GM13976 (cell line): ENCODE measurements at regions of chr1 and their contacts with region 1.

Region 1: DNA sequence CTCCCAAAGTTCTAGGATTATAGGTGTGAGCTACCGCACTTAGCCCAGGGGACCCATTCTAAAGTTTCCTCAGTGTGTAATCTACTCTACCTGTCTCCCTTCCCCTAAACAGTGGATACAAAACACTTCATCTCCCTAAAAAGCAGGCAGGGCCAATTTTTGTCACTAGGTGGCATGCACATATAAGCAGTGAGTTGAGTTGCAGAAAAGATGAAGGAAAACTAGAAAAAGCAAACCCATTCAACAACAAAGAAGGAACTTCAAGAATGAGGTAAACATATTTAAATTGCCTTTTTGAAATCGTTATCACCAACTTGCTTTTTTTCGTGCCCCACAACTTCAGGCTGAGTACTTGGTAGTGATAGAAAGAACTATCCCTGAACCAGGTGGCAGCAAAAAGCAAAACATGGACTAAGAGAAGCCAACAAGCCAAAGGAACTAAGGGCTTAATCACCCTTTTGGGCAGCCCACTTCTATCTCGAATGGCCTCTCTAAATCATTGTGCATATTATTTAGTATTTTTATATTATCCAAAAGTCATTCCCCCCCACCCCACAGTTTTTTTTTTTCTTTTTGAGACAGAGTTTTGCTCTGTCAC is 19.7 kb upstream of the ALDH9A1 start:
- DNase-seq: peak; percentile 61
- CTCF ChIP-seq: peak; percentile 59

Region 2: DNA sequence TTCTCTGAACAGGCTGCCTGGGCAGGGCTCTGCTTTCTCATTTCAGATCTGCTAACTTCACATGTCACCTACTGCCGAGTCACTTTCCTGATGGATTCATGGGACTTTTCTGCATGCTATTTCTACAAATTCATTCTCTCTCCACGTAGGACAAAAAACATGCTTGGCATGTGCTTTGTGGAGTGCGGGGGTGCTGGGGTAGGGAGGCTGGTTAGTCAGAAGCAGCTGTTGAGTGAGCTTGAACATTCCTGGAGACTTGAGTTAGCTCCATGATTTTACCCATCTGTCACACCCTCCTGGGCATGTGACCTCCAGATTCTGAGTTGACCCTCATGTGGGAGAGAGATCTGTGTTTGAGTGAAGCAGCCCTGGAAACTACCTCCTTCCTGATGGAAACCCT is 180.8 kb after region 1 on chr1:
- in situ Hi-C with region 1: no loop called
- DNase-seq: no peak
- CTCF ChIP-seq: no peak

Region 3: DNA sequence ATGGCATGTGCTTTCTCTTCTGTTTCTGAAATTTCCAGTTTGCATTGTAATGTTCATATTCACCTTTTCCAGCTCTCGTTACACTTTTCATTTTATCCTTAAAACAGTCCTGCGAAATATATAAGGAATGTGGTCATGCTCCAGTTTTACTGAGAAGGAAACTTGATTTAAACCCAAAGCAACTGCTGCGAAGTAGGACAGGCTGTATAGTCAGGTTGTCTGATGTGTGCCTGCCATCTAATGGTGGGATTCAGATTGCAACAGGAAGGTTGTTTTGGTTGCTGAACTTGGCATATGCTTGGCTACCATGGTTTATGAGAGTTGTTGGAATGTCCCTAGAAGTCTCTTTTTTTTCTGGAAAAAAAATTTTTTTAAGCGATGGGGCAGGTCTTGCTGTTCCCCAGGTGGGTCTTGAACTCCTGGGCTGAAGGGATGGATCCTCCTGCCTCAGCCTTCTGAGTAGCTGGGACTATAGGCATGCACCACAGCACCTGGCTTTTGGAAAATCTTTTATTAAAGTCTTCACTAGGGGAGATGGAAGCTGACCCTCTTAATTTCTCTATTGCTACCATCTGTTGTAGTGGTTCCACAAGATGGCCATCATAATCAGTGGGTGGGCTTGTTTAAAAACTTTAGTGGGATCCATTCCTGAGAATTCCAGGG is 196.2 kb after region 1 on chr1:
- in situ Hi-C with region 1: loop called (anchors 5 kb)
- DNase-seq: peak; percentile 77
- CTCF ChIP-seq: peak; percentile 86

Region 4: DNA sequence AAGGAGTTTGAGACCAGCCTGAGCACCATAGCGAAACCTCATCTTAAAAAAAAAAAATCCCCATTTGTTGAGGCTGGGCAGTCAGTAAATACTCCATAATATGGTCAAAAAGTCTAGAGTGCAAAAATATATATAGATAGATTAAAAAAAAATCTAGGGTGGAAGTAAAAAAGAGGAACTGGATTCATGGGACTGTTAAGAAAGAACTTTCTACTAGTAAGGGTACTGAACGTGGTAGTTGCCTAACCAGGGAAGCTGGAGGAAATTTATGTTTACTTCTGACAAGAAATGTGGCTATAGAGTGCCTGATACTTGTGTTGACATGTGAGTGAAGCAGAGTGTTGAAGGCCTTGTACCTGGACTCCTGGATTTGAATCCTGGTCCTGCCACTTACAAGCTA is 714.6 kb after region 1 on chr1:
- in situ Hi-C with region 1: loop called (anchors 25 kb)
- DNase-seq: no peak
- CTCF ChIP-seq: no peak